Natural killer cell (primary cell): ENCODE measurements at regions of chr1 and their contacts with region 1.

Region 1: DNA sequence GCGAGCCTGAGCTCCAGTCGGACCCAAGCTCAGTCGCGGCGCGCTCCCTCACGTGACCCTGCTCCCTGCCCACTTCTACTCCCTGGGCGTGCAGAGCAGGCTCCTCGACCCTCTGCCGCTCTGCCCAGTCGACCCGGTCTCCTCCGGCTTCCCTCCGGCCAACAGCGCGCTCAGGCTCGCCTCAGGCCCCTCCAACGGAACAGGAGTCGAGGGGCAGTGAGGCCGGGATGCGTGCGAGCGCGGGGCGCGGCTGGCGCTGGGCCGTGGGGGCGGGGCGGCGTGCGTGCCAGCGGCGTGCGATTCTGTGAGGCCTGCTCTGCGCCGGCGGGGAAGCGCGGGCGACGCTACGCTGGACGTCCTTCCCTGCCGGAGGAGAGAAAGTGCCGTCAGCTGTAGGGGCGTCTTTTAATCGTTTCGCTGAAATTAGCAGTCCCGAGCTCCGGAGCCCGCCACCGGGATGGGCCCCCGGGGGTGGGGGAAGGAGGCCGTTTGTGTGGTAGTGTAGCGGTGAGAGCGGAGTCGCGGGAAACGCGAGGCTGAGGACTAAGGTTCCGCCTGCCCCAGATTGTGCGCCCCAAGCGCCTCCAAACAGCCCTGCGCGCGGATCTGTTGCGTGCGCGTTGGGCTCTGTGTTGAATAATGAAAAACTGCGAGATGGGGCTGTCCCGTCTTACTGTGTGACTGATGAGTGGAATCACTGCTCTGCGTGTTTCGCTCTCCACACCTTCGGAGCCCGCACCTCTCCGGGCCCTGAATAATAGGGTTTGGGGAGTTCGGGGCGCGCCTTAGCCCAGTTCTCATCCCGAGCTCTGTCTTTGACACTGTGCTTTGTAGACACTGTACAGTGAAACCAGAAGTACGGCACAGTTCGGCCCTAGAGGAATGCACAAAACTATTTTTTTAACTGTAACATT is at the start of gene ACBD6:
- DNase-seq: peak; percentile 77 to 92
- ATAC-seq: peak; percentile 84 to 95 (median 91)
- H3K4me3 ChIP-seq: peak within 1 kb of the TSS; percentile 89
- H3K4me3 Mint-ChIP-seq: peak within 1 kb of the TSS; percentile 94
- H3K27ac ChIP-seq: peak within 1 kb of the TSS; percentile 81
- H3K27ac Mint-ChIP-seq: peak within 1 kb of the TSS; percentile 84 to 91
- H3K4me1 ChIP-seq: peaks cover 12% of the 10 kb centered on the region
- H3K4me1 Mint-ChIP-seq: peaks cover 14 to 28% of the 10 kb centered on the region in 2 donors
- H3K27me3 ChIP-seq: no peaks in the 10 kb centered on the region
- H3K27me3 Mint-ChIP-seq: peaks cover 0 to 4% of the 10 kb centered on the region in 2 donors
- CTCF ChIP-seq: no peak
- total RNA-seq, gene ACBD6: 29.8 to 47.3 (median 41.9) TPM

Region 2: DNA sequence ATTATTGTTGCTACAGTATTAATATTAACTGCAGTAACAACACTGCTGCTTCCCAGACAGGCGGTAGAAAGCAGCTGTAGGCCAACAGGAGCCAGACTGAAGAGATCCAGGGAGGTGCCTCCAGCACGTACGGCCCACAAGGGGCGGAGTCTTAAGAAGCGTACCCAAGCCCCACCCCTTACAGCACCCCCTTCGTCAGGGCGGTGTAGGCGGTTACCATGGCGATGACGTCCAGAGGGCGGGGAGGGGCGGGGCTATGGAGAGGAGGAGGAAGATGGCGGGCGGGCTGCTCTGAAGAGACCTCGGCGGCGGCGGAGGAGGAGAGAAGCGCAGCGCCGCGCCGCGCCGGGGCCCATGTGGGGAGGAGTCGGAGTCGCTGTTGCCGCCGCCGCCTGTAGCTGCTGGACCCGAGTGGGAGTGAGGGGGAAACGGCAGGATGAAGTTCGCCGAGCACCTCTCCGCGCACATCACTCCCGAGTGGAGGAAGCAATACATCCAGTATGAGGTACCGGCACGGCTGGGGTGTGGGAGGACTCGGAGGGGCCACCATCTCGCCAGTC is 129.2 kb after region 1 on chr1 and contains the start of gene XPR1:
- intact Hi-C with region 1: loop called (anchors 2 kb)
- DNase-seq: peak; percentile 88 to 100
- ATAC-seq: peak; percentile 95 to 100 (median 96)
- H3K4me3 ChIP-seq: peak within 1 kb of the TSS; percentile 95
- H3K4me3 Mint-ChIP-seq: no peak within 1 kb of the TSS
- H3K27ac ChIP-seq: peak within 1 kb of the TSS; percentile 92
- H3K27ac Mint-ChIP-seq: no peak within 1 kb of the TSS
- H3K4me1 ChIP-seq: peaks cover 3% of the 10 kb centered on the region
- H3K4me1 Mint-ChIP-seq: peaks cover 0 to 14% of the 10 kb centered on the region in 2 donors
- H3K27me3 ChIP-seq: no peaks in the 10 kb centered on the region
- H3K27me3 Mint-ChIP-seq: peaks cover 8 to 9% of the 10 kb centered on the region in 2 donors
- CTCF ChIP-seq: no peak
- total RNA-seq, gene XPR1: 14.8 to 18.2 (median 16.7) TPM